PC-9 (cell line): ENCODE measurements at regions of chr2 and their contacts with region 1.

Region 1: GRCh38 chr2:47862949-47863348 is 43.3 kb downstream of the FBXO11 start:
- DNase-seq: no peak
- H3K4me3 ChIP-seq: no peak overlapping the region
- H3K27ac ChIP-seq: no peak overlapping the region
- H3K4me1 ChIP-seq: no peaks in the 10 kb centered on the region
- H3K27me3 ChIP-seq: no peaks in the 10 kb centered on the region
- CTCF ChIP-seq: no peak

Region 2: DNA sequence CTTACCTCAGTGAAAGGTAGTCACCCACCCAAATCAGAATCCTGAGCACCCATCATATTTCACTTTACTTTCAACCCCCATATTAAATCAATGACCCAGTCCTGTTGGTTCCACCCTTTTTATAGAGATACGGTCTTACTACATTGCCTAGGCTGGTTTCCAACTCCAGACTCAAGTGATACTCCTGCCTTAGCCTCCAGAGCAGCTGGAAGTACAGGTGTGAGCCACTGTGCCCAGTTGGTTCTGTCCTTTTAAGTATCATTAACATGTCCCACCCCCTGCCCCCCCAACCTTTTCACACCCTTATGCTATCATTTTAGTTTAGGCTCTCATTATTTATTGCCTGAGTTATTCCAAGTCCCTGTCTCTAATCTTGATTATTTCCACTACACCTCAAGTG is 51.3 kb before region 1 on chr2:
- CTCF ChIA-PET with region 1: no interaction called
- POLR2A ChIA-PET with region 1: no interaction called
- intact Hi-C with region 1: no loop called
- DNase-seq: no peak
- H3K4me3 ChIP-seq: no peak overlapping the region
- H3K27ac ChIP-seq: peak overlapping the region; percentile 35
- H3K4me1 ChIP-seq: peaks cover 28% of the 10 kb centered on the region
- H3K27me3 ChIP-seq: no peaks in the 10 kb centered on the region
- CTCF ChIP-seq: no peak

Region 3: GRCh38 chr2:48589170-48589767 is 726.3 kb after region 1 on chr2:
- CTCF ChIA-PET with region 1: no interaction called
- POLR2A ChIA-PET with region 1: no interaction called
- intact Hi-C with region 1: loop called (anchors 5 kb)
- DNase-seq: peak in 1 of 2 experiments; percentile 43
- H3K4me3 ChIP-seq: no peak overlapping the region
- H3K27ac ChIP-seq: no peak overlapping the region
- H3K4me1 ChIP-seq: no peaks in the 10 kb centered on the region
- H3K27me3 ChIP-seq: no peaks in the 10 kb centered on the region
- CTCF ChIP-seq: peak; percentile 95